Naive thymus-derived CD4-positive, alpha-beta T cell (primary cell): ENCODE measurements at regions of chr20 and their contacts with region 1.

Region 1: DNA sequence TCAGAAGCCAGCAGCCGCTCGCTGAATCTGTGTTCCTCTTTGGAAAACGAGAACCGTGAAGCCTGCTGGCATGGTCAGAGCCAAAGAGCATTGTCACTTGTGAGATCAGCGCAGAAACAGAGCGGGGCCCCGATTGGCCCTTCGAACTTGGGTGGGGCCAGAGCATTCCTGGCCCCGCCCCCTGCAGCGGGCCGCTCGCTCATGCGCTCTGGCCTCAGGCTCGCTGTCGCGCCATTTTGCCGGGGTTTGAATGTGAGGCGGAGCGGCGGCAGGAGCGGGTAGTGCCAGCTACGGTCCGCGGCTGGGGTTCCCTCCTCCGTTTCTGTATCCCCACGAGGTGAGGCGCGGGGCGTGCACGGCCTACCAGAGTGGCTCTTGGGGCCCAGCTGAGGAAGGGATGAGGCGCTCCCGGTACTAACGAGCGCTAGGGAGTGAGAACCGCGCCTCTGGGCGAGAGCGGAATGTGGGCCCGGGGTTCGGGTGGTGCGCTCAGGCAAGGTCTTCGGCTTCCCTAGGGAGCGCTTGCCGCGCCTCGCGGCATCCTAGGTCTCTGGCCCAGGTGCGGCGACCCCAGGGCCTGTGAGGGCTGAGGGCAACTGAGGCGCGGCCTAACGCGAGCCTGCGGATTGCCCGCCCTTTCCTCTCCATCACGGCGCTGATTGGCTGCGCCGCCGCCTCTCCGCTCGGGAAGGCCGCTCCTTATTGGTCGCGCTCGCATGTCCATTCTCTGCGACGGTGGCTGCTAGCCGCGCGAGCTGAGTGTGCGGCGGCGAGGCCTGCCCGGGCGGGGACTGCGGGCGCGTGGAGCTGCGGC is at the start of gene CSE1L:
- DNase-seq: peak; percentile 90 to 98 (median 95)
- ATAC-seq: peak; percentile 92
- H3K4me3 ChIP-seq: peak within 1 kb of the TSS; percentile 99
- H3K4me3 Mint-ChIP-seq: peak within 1 kb of the TSS; percentile 94 to 99 (median 98)
- H3K27ac ChIP-seq: peak within 1 kb of the TSS; percentile 89
- H3K27ac Mint-ChIP-seq: peak within 1 kb of the TSS; percentile 92 to 100 (median 98)
- H3K4me1 ChIP-seq: peaks cover 11 to 14% of the 10 kb centered on the region in 2 donors
- H3K4me1 Mint-ChIP-seq: peaks cover 24 to 51% (median 42%) of the 10 kb centered on the region in 7 donors
- H3K27me3 ChIP-seq: no peaks in the 10 kb centered on the region
- H3K27me3 Mint-ChIP-seq: peaks cover 0 to 4% (median 0%) of the 10 kb centered on the region in 5 donors
- total RNA-seq, gene CSE1L: 23.3 to 73.0 (median 41.1) TPM

Region 2: GRCh38 chr20:47356526-47357295 is 1689.6 kb before region 1 on chr20 and contains the start of gene ZMYND8:
- CTCF ChIA-PET with region 1: no interaction called
- POLR2A ChIA-PET with region 1: no interaction called
- intact Hi-C with region 1: loop called in 1 of 2 experiments (anchors 5 kb)
- DNase-seq: peak; percentile 88 to 100 (median 98)
- ATAC-seq: peak; percentile 91
- H3K4me3 ChIP-seq: peak within 1 kb of the TSS; percentile 75
- H3K4me3 Mint-ChIP-seq: peak within 1 kb of the TSS in 4 of 10 donors; percentile 88 to 95 (median 92)
- H3K27ac ChIP-seq: peak within 1 kb of the TSS; percentile 86
- H3K27ac Mint-ChIP-seq: peak within 1 kb of the TSS in 7 of 9 donors; percentile 97 to 100 (median 99)
- H3K4me1 ChIP-seq: peaks cover 47 to 65% of the 10 kb centered on the region in 2 donors
- H3K4me1 Mint-ChIP-seq: peaks cover 51 to 74% (median 53%) of the 10 kb centered on the region in 7 donors
- H3K27me3 ChIP-seq: no peaks in the 10 kb centered on the region
- H3K27me3 Mint-ChIP-seq: no peaks in the 10 kb centered on the region
- total RNA-seq, gene ZMYND8: 54.5 to 83.0 (median 68.5) TPM

Region 3: GRCh38 chr20:49063279-49063678 is 17.0 kb after region 1 on chr20:
- CTCF ChIA-PET with region 1: no interaction called
- POLR2A ChIA-PET with region 1: interaction called, 6 read pairs
- intact Hi-C with region 1: loop called in 1 of 2 experiments (anchors 1 kb)
- DNase-seq: no peak
- ATAC-seq: no peak
- H3K4me3 ChIP-seq: no peak overlapping the region
- H3K4me3 Mint-ChIP-seq: no peak overlapping the region
- H3K27ac ChIP-seq: no peak overlapping the region
- H3K27ac Mint-ChIP-seq: no peak overlapping the region
- H3K4me1 ChIP-seq: no peaks in the 10 kb centered on the region
- H3K4me1 Mint-ChIP-seq: peaks cover 0 to 12% (median 4%) of the 10 kb centered on the region in 7 donors
- H3K27me3 ChIP-seq: no peaks in the 10 kb centered on the region
- H3K27me3 Mint-ChIP-seq: no peaks in the 10 kb centered on the region

Region 4: DNA sequence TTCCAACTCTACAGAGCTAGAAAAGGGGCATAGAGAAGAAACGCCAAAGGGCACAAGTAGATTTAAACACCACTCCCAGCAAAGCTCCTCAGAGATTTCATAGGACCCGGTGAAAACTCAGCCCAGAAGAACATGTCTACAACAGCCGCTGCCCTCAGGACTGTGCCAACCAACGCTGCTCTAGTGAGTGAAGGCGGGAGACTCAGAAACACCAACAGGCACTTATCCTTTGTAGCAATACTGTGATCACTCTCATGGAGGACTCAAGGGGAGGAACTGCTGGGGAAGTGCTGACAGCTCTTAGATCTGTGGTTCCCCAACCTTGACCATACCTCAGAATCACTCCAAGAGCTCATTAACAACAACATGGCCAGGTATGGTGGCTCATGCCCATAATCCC is 102.3 kb after region 1 on chr20:
- CTCF ChIA-PET with region 1: no interaction called
- POLR2A ChIA-PET with region 1: no interaction called
- intact Hi-C with region 1: no loop called
- DNase-seq: no peak
- ATAC-seq: peak; percentile 22
- H3K4me3 ChIP-seq: no peak overlapping the region
- H3K4me3 Mint-ChIP-seq: no peak overlapping the region
- H3K27ac ChIP-seq: no peak overlapping the region
- H3K27ac Mint-ChIP-seq: peak overlapping the region in 7 of 9 donors; percentile 16 to 76 (median 42)
- H3K4me1 ChIP-seq: no peaks in the 10 kb centered on the region
- H3K4me1 Mint-ChIP-seq: peaks cover 7 to 29% (median 22%) of the 10 kb centered on the region in 7 donors
- H3K27me3 ChIP-seq: no peaks in the 10 kb centered on the region
- H3K27me3 Mint-ChIP-seq: no peaks in the 10 kb centered on the region

Region 5: DNA sequence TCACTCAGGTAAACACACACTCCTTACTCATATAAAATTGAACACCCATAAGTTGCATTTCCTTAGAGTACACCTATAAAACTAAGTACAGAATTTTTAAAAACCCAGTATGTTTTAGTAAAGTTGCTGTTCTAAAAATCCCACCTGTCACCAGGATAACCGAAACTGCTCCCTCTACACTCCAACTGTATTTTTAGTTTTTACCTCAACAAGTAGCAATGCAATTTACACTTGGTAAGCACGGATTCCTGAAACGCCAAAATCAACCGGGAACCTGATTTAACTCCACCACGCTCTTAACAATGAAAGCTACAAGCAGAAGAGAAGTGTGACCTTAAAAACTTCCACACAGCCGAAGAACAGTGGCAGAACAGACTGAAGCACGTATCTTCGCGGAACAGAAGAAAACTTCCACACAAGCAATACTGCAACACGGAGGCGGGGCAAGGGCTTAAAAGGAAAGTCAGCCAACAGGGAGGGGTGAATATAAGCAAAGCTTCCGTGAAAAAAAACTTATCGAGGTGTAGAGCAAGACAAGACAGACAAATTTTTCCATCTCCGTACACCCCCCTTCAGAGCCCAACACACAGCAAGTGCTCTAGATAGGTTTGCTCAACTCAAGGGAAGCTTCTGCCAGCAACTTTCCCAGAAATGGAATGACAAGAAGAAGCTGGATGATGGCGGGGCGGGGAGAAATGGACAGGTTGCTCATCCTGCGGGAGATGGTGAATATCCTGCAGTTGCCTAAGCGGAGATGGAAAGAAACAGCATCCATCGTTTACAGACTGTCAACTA is 140.4 kb after region 1 on chr20:
- CTCF ChIA-PET with region 1: no interaction called
- POLR2A ChIA-PET with region 1: no interaction called
- intact Hi-C with region 1: loop called (anchors 1 kb)
- DNase-seq: peak; percentile 17 to 85 (median 73)
- ATAC-seq: peak; percentile 33
- H3K4me3 ChIP-seq: peak overlapping the region; percentile 88
- H3K4me3 Mint-ChIP-seq: peak overlapping the region; percentile 88 to 100 (median 94)
- H3K27ac ChIP-seq: peak overlapping the region; percentile 97
- H3K27ac Mint-ChIP-seq: peak overlapping the region; percentile 70 to 96 (median 93)
- H3K4me1 ChIP-seq: peaks cover 18% of the 10 kb centered on the region in 2 donors
- H3K4me1 Mint-ChIP-seq: peaks cover 38 to 56% (median 50%) of the 10 kb centered on the region in 7 donors
- H3K27me3 ChIP-seq: no peaks in the 10 kb centered on the region
- H3K27me3 Mint-ChIP-seq: peaks cover 0 to 7% (median 0%) of the 10 kb centered on the region in 5 donors

Region 6: DNA sequence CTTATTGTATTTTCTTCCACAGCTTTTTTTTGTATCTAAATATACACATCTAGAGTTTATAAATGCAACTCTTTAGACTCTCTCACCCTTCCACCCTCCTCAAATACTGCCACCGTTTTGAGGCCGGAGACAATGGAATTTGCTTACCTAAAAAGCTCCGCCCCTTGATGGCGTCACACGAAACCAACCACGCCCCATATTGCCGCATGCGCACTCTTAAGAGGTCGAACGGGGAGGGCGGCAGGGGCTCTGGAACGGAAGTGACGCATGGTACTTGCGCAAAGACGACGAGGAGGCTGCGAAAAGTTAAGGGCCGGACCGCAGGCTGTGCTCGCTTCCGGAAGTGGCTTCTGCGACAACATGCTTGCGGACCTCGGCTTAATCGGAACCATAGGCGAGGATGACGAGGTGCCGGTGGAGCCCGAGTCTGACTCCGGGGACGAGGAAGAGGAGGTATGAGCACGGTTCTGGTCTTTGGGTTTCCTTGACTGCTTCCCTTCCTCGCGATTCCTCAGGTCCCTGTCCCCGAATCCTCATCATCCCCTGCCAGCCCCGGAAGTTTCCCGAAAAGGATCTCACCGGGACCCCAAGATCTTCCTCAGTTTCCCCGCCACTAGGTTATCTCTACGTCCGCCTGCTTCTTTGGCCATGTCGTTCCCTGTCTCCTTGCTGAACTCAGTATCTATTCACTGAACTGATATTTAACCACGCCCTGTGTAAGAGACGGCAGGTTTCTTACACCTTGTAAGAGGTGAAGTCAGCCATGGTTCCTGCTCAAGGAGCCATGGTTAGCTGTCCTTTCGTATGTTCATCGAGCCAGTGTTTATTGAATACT is 173.0 kb after region 1 on chr20 and contains the start of gene DDX27:
- CTCF ChIA-PET with region 1: interaction called, 3 read pairs
- POLR2A ChIA-PET with region 1: interaction called, 4 read pairs
- intact Hi-C with region 1: loop called (anchors 1 kb)
- DNase-seq: peak; percentile 90 to 98 (median 98)
- ATAC-seq: peak; percentile 92
- H3K4me3 ChIP-seq: peak within 1 kb of the TSS; percentile 91
- H3K4me3 Mint-ChIP-seq: peak within 1 kb of the TSS; percentile 88 to 100 (median 96)
- H3K27ac ChIP-seq: peak within 1 kb of the TSS; percentile 99
- H3K27ac Mint-ChIP-seq: peak within 1 kb of the TSS; percentile 89 to 100 (median 96)
- H3K4me1 ChIP-seq: peaks cover 9 to 11% of the 10 kb centered on the region in 2 donors
- H3K4me1 Mint-ChIP-seq: peaks cover 14 to 42% (median 26%) of the 10 kb centered on the region in 7 donors
- H3K27me3 ChIP-seq: no peaks in the 10 kb centered on the region
- H3K27me3 Mint-ChIP-seq: peaks cover 0 to 2% (median 0%) of the 10 kb centered on the region in 5 donors
- total RNA-seq, gene DDX27: 43.4 to 94.1 (median 65.7) TPM

Region 7: GRCh38 chr20:49812463-49813304 is 766.4 kb after region 1 on chr20 and contains the start of gene SLC9A8:
- CTCF ChIA-PET with region 1: no interaction called
- POLR2A ChIA-PET with region 1: no interaction called
- intact Hi-C with region 1: loop called in 1 of 2 experiments (anchors 2 kb)
- DNase-seq: peak; percentile 67 to 85 (median 75)
- ATAC-seq: peak; percentile 93
- H3K4me3 ChIP-seq: peak within 1 kb of the TSS; percentile 81
- H3K4me3 Mint-ChIP-seq: peak within 1 kb of the TSS; percentile 90 to 99 (median 94)
- H3K27ac ChIP-seq: peak within 1 kb of the TSS; percentile 95
- H3K27ac Mint-ChIP-seq: peak within 1 kb of the TSS; percentile 94 to 98 (median 96)
- H3K4me1 ChIP-seq: peaks cover 12 to 17% of the 10 kb centered on the region in 2 donors
- H3K4me1 Mint-ChIP-seq: peaks cover 13 to 44% (median 39%) of the 10 kb centered on the region in 7 donors
- H3K27me3 ChIP-seq: no peaks in the 10 kb centered on the region
- H3K27me3 Mint-ChIP-seq: no peaks in the 10 kb centered on the region
- total RNA-seq, gene SLC9A8: 21.7 to 42.5 (median 25.7) TPM

Region 8: GRCh38 chr20:49915378-49916145 is 869.3 kb after region 1 on chr20 and contains the start of gene SPATA2:
- CTCF ChIA-PET with region 1: no interaction called
- POLR2A ChIA-PET with region 1: no interaction called
- intact Hi-C with region 1: loop called in 1 of 2 experiments (anchors 5 kb)
- DNase-seq: peak; percentile 87 to 99 (median 93)
- ATAC-seq: peak; percentile 88
- H3K4me3 ChIP-seq: peak within 1 kb of the TSS; percentile 93
- H3K4me3 Mint-ChIP-seq: peak within 1 kb of the TSS; percentile 96 to 99 (median 97)
- H3K27ac ChIP-seq: peak within 1 kb of the TSS; percentile 100
- H3K27ac Mint-ChIP-seq: peak within 1 kb of the TSS; percentile 97 to 100 (median 99)
- H3K4me1 ChIP-seq: peaks cover 11 to 16% of the 10 kb centered on the region in 2 donors
- H3K4me1 Mint-ChIP-seq: peaks cover 25 to 48% (median 36%) of the 10 kb centered on the region in 7 donors
- H3K27me3 ChIP-seq: no peaks in the 10 kb centered on the region
- H3K27me3 Mint-ChIP-seq: no peaks in the 10 kb centered on the region
- total RNA-seq, gene SPATA2: 9.0 to 18.4 (median 10.0) TPM

Region 9: DNA sequence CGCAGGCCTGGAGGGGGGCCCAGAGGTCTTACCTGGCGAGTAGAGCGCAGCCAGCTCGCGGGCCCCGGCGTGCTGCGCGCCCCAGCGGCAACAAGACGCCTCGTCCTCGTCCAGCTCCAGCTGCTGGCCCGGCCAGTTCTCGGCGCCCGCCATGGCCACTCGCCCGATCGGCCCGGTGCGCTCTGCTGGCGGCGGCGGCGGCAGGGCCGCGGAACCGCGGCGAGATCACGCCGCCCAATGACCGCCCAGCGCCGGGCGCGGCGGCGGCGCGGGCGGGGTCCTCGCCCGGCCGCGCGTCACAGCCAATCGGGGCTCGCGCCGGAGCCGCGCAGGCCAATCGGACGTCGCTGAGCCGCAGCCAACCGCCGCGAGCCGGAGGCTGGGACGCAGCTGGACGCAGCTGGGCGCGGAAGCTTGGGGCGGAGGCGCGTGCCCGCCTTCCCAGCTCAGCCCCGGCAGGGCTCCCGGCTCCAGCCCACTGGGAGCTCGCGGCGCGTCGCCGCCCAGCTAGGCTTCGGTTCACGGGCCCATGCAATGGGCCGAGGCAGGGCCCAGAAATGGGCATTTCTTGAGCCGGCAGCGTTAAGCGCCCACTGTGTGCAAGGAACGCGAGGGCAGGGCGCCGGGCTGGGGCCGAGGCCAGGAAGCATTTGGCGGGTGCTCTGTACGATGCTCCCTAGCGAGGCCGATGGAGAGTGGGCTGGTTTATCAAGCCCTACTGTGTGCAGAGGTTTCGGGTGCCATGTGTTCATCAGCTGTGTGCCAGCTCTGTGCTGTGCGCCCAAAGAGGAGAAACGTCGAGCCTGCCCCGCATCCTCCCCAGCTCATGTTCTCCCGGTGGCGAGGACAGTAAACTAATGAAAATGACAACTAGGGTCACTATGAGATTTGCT is 1107.4 kb after region 1 on chr20 and contains the start of gene PEDS1:
- CTCF ChIA-PET with region 1: no interaction called
- POLR2A ChIA-PET with region 1: no interaction called
- intact Hi-C with region 1: no loop called
- DNase-seq: peak; percentile 72 to 89 (median 81)
- ATAC-seq: peak; percentile 99
- H3K4me3 ChIP-seq: peak within 1 kb of the TSS; percentile 91
- H3K4me3 Mint-ChIP-seq: peak within 1 kb of the TSS; percentile 81 to 93 (median 89)
- H3K27ac ChIP-seq: peak within 1 kb of the TSS; percentile 93
- H3K27ac Mint-ChIP-seq: peak within 1 kb of the TSS; percentile 87 to 98 (median 93)
- H3K4me1 ChIP-seq: peaks cover 22 to 24% of the 10 kb centered on the region in 2 donors
- H3K4me1 Mint-ChIP-seq: peaks cover 38 to 50% (median 43%) of the 10 kb centered on the region in 7 donors
- H3K27me3 ChIP-seq: no peaks in the 10 kb centered on the region
- H3K27me3 Mint-ChIP-seq: no peaks in the 10 kb centered on the region
- total RNA-seq, gene PEDS1: 16.0 to 27.6 (median 20.8) TPM